ENCODE measurements at regions of chr12 and their contacts with region 1.

Region 1: GRCh38 chr12:79407671-79408622 is 282.8 kb downstream of the PAWR start:
- DNase-seq: peak; percentile 85 to 86
- H3K4me3 ChIP-seq: no peak overlapping the region
- H3K4me3 Mint-ChIP-seq: peak overlapping the region; percentile 30
- H3K27ac Mint-ChIP-seq: peak overlapping the region; percentile 73
- H3K4me1 ChIP-seq: peaks cover 50% of the 10 kb centered on the region
- H3K4me1 Mint-ChIP-seq: peaks cover 35% of the 10 kb centered on the region
- H3K27me3 ChIP-seq: no peaks in the 10 kb centered on the region
- H3K27me3 Mint-ChIP-seq: no peaks in the 10 kb centered on the region
- CTCF ChIP-seq: peak; percentile 59 to 87

Region 2: GRCh38 chr12:79503281-79503680 is 95.3 kb after region 1 on chr12:
- CTCF ChIA-PET with region 1: no interaction called
- POLR2A ChIA-PET with region 1: no interaction called
- intact Hi-C with region 1: no loop called
- DNase-seq: no peak
- H3K4me3 ChIP-seq: no peak overlapping the region
- H3K4me3 Mint-ChIP-seq: no peak overlapping the region
- H3K27ac Mint-ChIP-seq: no peak overlapping the region
- H3K4me1 ChIP-seq: no peaks in the 10 kb centered on the region; the same call in 1 of the 2 replicates
- H3K4me1 Mint-ChIP-seq: no peaks in the 10 kb centered on the region
- H3K27me3 ChIP-seq: no peaks in the 10 kb centered on the region
- H3K27me3 Mint-ChIP-seq: no peaks in the 10 kb centered on the region
- CTCF ChIP-seq: no peak

Region 3: GRCh38 chr12:79531122-79531913 is 123.4 kb after region 1 on chr12:
- CTCF ChIA-PET with region 1: interaction called, 5 read pairs
- POLR2A ChIA-PET with region 1: no interaction called
- intact Hi-C with region 1: loop called (anchors 1 kb)
- DNase-seq: no peak
- H3K4me3 ChIP-seq: no peak overlapping the region
- H3K4me3 Mint-ChIP-seq: no peak overlapping the region
- H3K27ac Mint-ChIP-seq: peak overlapping the region; percentile 78
- H3K4me1 ChIP-seq: peaks cover 62% of the 10 kb centered on the region
- H3K4me1 Mint-ChIP-seq: peaks cover 36% of the 10 kb centered on the region
- H3K27me3 ChIP-seq: no peaks in the 10 kb centered on the region
- H3K27me3 Mint-ChIP-seq: no peaks in the 10 kb centered on the region
- CTCF ChIP-seq: no peak

Region 4: DNA sequence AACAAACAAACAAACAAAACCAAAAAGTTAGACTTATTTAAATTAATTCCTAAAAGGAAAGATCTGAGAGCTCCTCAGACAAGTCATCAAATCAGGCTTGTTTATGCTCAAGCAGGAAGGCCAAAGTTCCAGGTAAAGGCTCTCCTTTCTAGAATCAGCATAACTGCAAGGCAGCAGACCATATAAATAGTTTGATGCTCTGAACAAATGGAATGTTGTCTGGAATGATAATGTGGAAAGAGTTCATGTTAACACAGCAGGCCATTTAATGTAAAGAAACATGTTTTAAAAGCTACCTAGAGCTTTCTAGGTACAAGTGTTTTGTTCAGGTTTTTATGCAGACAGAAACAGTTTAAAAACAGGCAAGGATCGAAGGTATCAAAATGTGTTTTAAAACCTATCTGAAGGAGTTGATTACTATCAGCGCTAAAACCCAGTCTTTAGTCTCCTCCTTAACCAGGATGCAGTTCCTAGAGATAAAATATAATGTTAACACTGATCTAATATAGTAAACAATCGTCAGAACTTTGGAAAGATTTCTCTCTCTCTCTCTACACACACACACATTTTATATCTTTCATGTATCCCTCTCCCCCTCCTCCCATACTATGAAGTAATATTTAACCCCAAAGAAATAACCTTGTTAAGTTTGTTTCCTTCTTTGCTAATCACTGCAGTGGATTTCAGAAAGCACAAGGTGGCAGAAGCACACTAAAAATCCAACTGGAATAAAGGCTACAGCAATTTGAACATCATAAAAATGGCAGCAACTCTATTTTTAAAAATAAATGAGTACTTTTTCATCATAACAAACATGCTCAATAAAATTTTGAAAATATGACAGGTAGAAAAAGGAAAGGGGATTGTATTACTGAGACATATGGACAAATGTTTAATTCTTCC is 147.3 kb after region 1 on chr12:
- CTCF ChIA-PET with region 1: no interaction called
- POLR2A ChIA-PET with region 1: no interaction called
- intact Hi-C with region 1: loop called (anchors 1 kb)
- DNase-seq: peak in 1 of 2 experiments; percentile 49
- H3K4me3 ChIP-seq: no peak overlapping the region
- H3K4me3 Mint-ChIP-seq: peak overlapping the region; percentile 12
- H3K27ac Mint-ChIP-seq: peak overlapping the region; percentile 76
- H3K4me1 ChIP-seq: peaks cover 73% of the 10 kb centered on the region
- H3K4me1 Mint-ChIP-seq: peaks cover 34% of the 10 kb centered on the region
- H3K27me3 ChIP-seq: no peaks in the 10 kb centered on the region
- H3K27me3 Mint-ChIP-seq: no peaks in the 10 kb centered on the region
- CTCF ChIP-seq: peak; percentile 56 to 71

Region 5: DNA sequence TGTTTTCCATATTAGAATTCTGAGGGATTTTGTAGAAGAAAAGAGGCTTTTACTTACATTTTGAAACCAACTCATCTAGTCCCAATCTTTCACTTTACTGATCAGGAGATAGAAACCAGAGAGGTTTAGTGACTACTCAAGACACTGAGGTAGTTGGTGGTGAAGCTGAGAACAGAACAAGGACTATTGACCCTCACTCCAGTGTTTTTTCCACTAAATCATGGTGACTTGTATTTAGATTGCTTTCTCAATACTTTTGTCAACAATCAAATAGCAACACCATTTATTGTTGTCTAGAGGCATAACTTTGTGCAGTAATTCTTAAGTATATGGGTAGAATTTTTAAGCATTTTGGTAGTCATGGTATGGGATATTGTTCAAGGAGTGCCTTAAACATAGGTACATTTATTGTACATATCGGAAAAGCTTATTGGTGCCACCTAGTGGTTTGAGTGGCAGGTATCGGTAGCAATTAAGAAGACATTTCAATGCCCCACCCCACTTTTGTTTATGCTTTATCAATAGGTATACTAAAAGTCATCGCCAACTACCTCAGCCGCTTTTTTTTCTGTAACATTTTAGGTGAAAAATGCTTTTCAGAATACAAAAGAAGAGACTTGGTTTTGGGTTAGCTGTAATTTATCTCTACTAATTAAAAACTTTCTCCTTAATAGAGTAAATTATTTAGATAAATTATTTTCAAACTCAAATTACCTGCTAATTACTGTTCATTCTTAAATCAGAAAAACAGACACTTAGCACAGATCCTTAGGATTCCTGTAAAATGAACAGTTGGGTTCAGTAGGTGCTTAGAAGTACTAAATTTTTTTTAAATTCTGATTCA is 330.1 kb after region 1 on chr12:
- CTCF ChIA-PET with region 1: interaction called, 3 read pairs
- POLR2A ChIA-PET with region 1: no interaction called
- intact Hi-C with region 1: loop called (anchors 1 kb)
- DNase-seq: peak; percentile 62 to 69
- H3K4me3 ChIP-seq: no peak overlapping the region
- H3K4me3 Mint-ChIP-seq: no peak overlapping the region
- H3K27ac Mint-ChIP-seq: no peak overlapping the region
- H3K4me1 ChIP-seq: peaks cover 9% of the 10 kb centered on the region; the same call in 1 of the 2 replicates
- H3K4me1 Mint-ChIP-seq: peaks cover 6% of the 10 kb centered on the region
- H3K27me3 ChIP-seq: no peaks in the 10 kb centered on the region
- H3K27me3 Mint-ChIP-seq: no peaks in the 10 kb centered on the region
- CTCF ChIP-seq: peak; percentile 50 to 58

Region 6: GRCh38 chr12:79997096-79997791 is 589.3 kb after region 1 on chr12:
- CTCF ChIA-PET with region 1: no interaction called
- POLR2A ChIA-PET with region 1: no interaction called
- intact Hi-C with region 1: loop called (anchors 10 kb)
- DNase-seq: no peak
- H3K4me3 ChIP-seq: no peak overlapping the region
- H3K4me3 Mint-ChIP-seq: no peak overlapping the region
- H3K27ac Mint-ChIP-seq: no peak overlapping the region
- H3K4me1 ChIP-seq: peaks cover 17% of the 10 kb centered on the region
- H3K4me1 Mint-ChIP-seq: peaks cover 7% of the 10 kb centered on the region
- H3K27me3 ChIP-seq: no peaks in the 10 kb centered on the region
- H3K27me3 Mint-ChIP-seq: no peaks in the 10 kb centered on the region
- CTCF ChIP-seq: no peak

Region 7: DNA sequence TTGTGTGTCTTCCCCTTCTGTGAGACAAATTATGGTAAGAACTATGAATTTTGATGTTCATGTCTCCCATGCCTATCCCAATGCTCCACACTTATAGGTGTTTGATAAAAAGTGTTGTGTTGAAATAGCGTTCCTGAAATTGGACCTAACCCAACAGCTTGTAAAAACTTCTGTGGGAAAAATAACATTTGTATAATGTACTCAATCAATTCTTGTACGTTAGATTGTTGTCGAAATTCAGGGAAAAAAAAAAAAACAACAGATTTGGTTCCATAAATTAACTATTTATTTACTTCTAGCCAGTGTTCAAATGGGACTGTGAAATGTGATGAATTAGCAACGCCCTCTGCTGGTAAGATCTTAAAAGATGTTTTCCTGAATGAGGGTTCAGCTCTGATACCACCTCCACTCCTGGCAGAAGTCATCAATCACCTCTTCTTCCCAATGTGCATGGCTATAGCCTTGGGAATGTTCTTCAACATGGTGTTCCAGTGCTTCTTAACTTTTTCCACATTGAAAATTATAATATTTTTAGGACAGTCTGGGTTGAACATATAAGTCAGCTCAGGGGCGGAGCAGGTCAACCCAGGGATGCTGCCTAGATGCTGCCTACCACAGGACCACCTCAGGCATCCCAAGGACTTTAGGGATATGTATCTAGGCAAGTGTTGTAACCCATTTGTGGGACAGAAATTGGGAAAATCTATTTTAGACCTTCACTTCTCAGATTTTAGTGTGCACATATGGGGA is 862.0 kb after region 1 on chr12:
- CTCF ChIA-PET with region 1: no interaction called
- POLR2A ChIA-PET with region 1: no interaction called
- intact Hi-C with region 1: loop called (anchors 1 kb)
- DNase-seq: peak in 1 of 2 experiments; percentile 51
- H3K4me3 ChIP-seq: no peak overlapping the region
- H3K4me3 Mint-ChIP-seq: no peak overlapping the region
- H3K27ac Mint-ChIP-seq: no peak overlapping the region
- H3K4me1 ChIP-seq: no peaks in the 10 kb centered on the region
- H3K4me1 Mint-ChIP-seq: peaks cover 7% of the 10 kb centered on the region
- H3K27me3 ChIP-seq: no peaks in the 10 kb centered on the region
- H3K27me3 Mint-ChIP-seq: peaks cover 3% of the 10 kb centered on the region
- CTCF ChIP-seq: peak; percentile 55 to 63